ENCODE measurements at regions of chrX and their contacts with region 1.

Region 1: DNA sequence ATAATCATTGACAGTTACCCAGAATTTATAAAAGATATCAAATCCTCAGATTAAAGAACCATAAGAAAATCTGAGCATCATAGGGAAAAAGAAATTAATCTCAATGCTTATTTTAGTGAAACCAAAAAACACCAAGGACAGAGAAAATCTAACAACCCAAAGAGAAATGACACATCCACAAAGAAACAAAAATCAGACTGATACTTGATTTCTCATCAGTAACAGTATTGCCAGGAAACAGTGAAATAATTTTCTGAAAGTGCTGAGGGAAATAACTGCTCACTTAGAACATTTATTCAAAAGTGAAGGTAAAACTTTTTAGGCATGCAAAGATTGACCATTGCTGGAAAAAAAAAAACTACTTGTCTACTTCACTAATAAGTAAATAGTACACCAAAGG is 10.6 kb downstream of the MOSPD2 start:
- DNase-seq: no peak
- H3K4me3 Mint-ChIP-seq: no peak overlapping the region
- H3K27ac Mint-ChIP-seq: peak overlapping the region; percentile 82
- H3K4me1 Mint-ChIP-seq: peaks cover 16% of the 10 kb centered on the region
- H3K27me3 Mint-ChIP-seq: no peaks in the 10 kb centered on the region

Region 2: GRCh38 chrX:13688958-13689740 is 1194.7 kb before region 1 on chrX and contains the start of gene RAB9A:
- intact Hi-C with region 1: no loop called
- DNase-seq: peak; percentile 76
- H3K4me3 Mint-ChIP-seq: peak within 1 kb of the TSS; percentile 89
- H3K27ac Mint-ChIP-seq: peak within 1 kb of the TSS; percentile 95
- H3K4me1 Mint-ChIP-seq: peaks cover 51% of the 10 kb centered on the region
- H3K27me3 Mint-ChIP-seq: no peaks in the 10 kb centered on the region
- total RNA-seq, gene RAB9A: 9.4 and 11.8 TPM in 2 replicates

Region 3: DNA sequence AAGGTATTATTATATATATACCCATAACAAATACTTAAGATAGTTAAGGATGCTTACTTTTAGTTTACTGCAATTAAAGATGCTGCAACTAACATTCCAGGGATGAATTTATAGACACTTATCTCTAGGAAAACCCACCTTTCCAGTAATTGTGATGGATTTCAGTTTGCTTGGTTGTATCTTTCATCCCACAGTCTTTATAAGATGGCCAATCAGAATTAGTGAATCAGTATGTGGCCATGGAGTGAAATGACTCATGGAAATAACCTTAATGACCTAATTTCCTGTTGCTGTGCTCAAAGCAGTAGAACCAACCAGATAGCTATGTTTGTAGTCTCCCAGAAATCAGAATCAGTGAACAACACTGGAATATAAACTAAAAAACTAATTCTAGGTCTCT is 15.8 kb after region 1 on chrX:
- intact Hi-C with region 1: loop called (anchors 1 kb)
- DNase-seq: peak; percentile 0
- H3K4me3 Mint-ChIP-seq: peak overlapping the region; percentile 26
- H3K27ac Mint-ChIP-seq: peak overlapping the region; percentile 77
- H3K4me1 Mint-ChIP-seq: no peaks in the 10 kb centered on the region
- H3K27me3 Mint-ChIP-seq: no peaks in the 10 kb centered on the region

Measured in activated T-helper 1 cell treated with anti-CD3 and anti-CD28 coated beads, Interleukin-12 subunit alpha, Interleukin-12 subunit beta, Interleukin-2, Interleukin-4 antibody, amounts not matched to agents 30 ng/mL and 10 ng/mL and 1 ng/mL, durations not matched to agents 14 hours and 24 hours and 36 hours (primary cell).